Right lobe of liver (tissue), 6 donors: ENCODE measurements at regions of chr20 and their contacts with region 1.

Region 1: DNA sequence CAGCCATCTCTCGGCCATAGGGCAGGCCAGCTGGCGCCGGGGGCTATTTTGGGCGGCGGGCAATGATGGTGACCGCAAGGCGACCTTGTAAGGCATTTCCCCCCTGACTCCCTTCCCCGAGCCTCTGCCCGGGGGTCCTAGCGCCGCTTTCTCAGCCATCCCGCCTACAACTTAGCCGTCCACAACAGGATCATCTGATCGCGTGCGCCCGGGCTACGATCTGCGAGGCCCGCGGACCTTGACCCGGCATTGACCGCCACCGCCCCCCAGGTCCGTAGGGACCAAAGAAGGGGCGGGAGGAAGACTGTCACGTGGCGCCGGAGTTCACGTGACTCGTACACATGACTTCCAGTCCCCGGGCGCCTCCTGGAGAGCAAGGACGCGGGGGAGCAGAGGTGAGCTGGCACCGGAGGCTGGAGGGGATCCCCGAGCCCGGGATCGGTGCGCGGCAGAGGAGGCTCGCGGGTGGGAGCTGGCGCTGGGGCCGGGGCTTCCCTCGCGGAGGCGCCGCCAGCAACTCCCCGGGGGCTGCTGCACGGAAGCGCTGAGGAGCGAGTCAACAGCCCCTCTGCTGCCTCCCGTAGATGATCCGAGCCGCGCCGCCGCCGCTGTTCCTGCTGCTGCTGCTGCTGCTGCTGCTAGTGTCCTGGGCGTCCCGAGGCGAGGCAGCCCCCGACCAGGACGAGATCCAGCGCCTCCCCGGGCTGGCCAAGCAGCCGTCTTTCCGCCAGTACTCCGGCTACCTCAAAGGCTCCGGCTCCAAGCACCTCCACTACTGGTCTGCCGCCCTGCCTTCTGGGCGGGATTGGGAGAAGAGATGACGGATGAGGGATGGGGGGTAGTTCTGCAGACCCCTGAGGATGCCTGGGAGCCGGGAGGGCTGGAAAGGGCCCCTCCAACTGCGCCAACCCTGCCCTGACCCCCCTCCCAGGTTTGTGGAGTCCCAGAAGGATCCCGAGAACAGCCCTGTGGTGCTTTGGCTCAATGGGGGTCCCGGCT is at the starts of genes CTSA and NEURL2:
- DNase-seq: peak; percentile 95 to 97 (median 97)
- ATAC-seq: peak; percentile 82 to 89 (median 84)
- H3K4me3 ChIP-seq: peak within 1 kb of the TSS; percentile 75 to 93 (median 77)
- H3K27ac ChIP-seq: peak within 1 kb of the TSS; percentile 75 to 82 (median 81)
- H3K4me1 ChIP-seq: peaks cover 0 to 38% (median 6%) of the 10 kb centered on the region in 4 donors
- H3K27me3 ChIP-seq: no peaks in the 10 kb centered on the region
- CTCF ChIP-seq: peak in 1 of 4 donors; percentile 15
- POLR2A ChIP-seq: peak; percentile 80
- total RNA-seq, gene CTSA: 54.4 to 194 (median 134) TPM
- total RNA-seq, gene NEURL2: 3.6 to 8.8 (median 5.4) TPM

Region 2: GRCh38 chr20:45946149-45946970 is 55.1 kb after region 1 on chr20:
- intact Hi-C with region 1: loop called in 1 of 2 experiments (anchors 10 kb)
- DNase-seq: peak; percentile 78 to 90 (median 89)
- ATAC-seq: peak; percentile 84 to 90 (median 88)
- H3K4me3 ChIP-seq: no peak overlapping the region
- H3K27ac ChIP-seq: peak overlapping the region; percentile 62 to 76 (median 68)
- H3K4me1 ChIP-seq: peaks cover 0 to 23% (median 3%) of the 10 kb centered on the region in 4 donors
- H3K27me3 ChIP-seq: no peaks in the 10 kb centered on the region
- CTCF ChIP-seq: no peak
- POLR2A ChIP-seq: peak; percentile 29